ENCODE measurements at regions of chr9 and their contacts with region 1.

Region 1: DNA sequence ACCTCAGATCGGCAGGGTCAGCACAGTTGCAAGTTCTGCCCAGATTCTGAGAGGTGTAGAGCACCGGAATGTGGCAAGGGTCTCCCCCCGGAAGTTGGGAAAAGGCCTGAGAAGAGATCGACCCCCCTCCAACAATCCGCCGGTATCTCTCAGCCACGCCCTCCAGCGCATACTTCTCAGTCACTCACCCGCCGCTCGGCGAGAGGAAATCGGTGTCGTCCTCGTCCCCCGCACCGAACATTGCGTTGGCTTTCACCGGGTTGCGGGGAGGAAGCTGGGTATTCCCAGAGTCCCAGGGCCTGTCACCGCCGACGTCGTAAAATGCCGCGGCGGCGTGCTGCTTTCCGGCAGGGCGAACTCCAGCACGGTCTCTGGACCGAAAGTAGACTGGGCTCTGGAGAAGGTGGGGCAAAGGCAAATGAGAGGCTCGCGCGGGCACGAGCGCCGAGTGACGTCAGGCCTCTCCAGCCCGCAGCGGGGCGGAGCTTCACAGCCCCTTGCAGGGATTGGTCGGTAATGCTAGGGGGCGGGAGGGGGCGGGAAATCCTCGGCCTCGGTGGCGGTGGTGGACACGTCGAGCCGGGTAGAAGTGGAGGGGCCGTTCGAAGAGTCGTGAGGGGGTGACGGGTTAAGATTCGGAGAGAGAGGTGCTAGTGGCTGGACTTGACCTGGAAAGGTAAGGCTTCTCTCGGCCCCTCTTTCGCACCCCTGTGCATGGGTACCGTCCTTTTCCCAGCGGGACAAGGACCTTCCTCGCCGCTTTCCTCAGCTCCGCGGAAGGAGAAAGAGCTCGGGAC is at the starts of genes FKBP15 and SLC31A1:
- DNase-seq: peak; percentile 98

Region 2: DNA sequence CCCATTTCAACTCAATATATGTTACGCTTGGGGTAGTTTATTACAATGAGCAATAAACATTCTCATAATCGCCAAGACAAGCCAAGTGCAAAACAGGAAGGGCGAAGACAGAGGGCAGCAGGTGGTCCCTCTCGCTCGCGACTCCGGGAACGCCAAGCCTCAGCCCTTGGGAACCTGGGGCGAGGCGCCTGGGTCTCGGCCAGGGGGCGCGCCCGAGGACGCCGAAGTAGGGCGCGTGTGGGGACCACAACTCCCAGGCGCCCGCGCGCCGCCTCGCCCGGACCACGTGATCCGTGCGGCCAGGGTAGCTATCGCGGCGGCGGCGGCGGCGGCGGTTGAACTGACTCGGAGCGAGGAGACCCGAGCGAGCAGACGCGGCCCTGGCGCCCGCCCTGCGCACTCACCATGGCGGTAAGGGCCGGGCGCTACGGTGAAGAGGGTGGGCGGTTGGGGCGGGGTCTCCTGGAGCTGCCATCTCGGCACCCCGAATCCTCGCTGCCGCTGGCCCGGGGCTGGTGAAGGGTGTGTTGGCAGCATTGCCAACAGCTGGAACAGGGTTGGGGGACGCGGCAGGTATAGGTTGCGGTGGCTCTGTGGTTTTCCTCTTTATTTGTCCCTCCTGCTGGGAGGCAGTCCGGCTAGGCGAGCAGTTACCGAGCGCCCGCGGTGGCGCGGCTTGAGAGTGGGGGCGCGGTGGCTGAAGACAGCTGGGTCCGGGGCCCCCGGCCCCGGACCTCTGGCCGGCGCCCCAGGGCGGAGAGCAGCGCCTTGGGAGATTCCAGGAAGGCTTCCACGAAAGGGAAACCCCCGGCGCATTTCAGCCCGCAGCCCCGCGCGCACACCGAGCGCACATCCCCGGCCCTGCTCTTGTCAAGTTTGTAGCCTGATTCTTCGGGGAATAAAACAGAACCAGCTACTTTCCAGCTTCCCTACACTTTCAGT is 70.3 kb before region 1 on chr9 and contains the start of gene SLC31A2:
- CTCF ChIA-PET with region 1: no interaction called
- POLR2A ChIA-PET with region 1: interaction called, 18 read pairs
- DNase-seq: peak; percentile 92

Region 3: GRCh38 chr9:113184539-113184938 is 36.7 kb before region 1 on chr9:
- CTCF ChIA-PET with region 1: no interaction called
- POLR2A ChIA-PET with region 1: no interaction called
- DNase-seq: no peak

Region 4: GRCh38 chr9:113238859-113239232 is 17.6 kb after region 1 on chr9:
- CTCF ChIA-PET with region 1: no interaction called
- POLR2A ChIA-PET with region 1: interaction called, 11 read pairs
- DNase-seq: no peak

Region 5: DNA sequence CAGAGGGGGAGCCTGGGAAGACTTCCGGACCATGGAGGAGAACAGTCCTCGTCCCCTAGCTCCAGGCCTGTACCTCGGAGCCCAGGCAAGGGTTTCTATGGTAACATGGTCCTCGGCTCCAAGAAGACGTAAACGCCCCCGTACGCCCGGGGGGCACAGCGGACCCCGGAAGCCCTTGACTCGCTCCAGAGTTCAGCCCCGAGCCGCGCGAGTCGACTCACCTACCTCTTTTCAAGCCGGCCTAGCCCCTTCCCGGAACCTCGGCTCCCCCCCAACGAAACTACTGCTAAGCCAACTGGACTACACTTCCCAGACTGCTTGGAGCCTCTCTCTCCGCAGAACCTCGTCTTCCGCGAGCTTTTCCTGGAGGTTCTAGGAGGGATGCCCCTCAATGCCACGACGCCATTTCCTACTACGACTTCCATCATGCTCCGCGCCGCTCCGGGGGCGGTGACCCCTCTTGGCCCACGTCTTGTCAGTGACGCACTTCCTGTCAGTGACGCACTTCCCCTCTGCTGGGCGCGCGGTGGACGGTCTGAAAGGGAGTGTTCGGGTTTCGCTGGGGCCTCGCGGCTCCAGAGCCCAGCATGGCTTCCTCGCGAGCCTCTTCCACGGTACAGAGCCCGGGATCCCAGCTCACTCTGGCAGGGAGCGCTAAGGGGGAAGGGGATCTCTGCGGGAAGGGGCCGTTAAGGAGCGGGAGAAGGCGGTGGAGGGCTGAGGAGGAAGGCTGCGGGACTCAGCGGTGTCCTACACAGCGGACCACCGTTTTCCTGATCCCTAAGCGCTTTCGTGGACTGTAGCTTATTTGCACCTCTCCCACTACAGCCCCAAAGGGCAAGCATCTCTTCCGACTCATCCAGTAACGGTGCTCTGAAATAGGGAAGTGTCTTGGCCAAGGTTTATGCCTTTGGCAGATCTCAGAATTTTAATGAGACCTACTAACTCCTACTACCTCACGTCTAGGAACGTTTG is 54.2 kb after region 1 on chr9 and contains the starts of genes CDC26 and PRPF4:
- CTCF ChIA-PET with region 1: interaction called, 4 read pairs
- POLR2A ChIA-PET with region 1: interaction called, 13 read pairs
- DNase-seq: peak; percentile 98